ENCODE measurements at regions of chr1 and their contacts with region 1.

Region 1: GRCh38 chr1:201023517-201023902 is at the start of gene KIF21B:
- DNase-seq: peak; percentile 83 to 94 (median 90)
- ATAC-seq: peak; percentile 81 to 82
- H3K4me3 Mint-ChIP-seq: peak within 1 kb of the TSS; percentile 88 to 98 (median 93)
- H3K27ac Mint-ChIP-seq: peak within 1 kb of the TSS; percentile 91 to 99 (median 98)
- H3K4me1 Mint-ChIP-seq: peaks cover 39 to 80% (median 67%) of the 10 kb centered on the region in 4 donors
- H3K27me3 Mint-ChIP-seq: no peaks in the 10 kb centered on the region
- polyA plus RNA-seq, gene KIF21B: 2.2 to 8.3 (median 3.5) TPM

Region 2: GRCh38 chr1:200973937-200974657 is 49.4 kb before region 1 on chr1:
- POLR2A ChIA-PET with region 1: interaction called, 11 read pairs
- DNase-seq: peak in 1 of 10 donors; percentile 28
- ATAC-seq: peak in 1 of 2 donors; percentile 20
- H3K4me3 Mint-ChIP-seq: no peak overlapping the region
- H3K27ac Mint-ChIP-seq: peak overlapping the region in 7 of 10 donors; percentile 6 to 92 (median 20)
- H3K4me1 Mint-ChIP-seq: peaks cover 2 to 14% (median 10%) of the 10 kb centered on the region in 4 donors
- H3K27me3 Mint-ChIP-seq: no peaks in the 10 kb centered on the region

Region 3: GRCh38 chr1:201009962-201010645 is 13.4 kb before region 1 on chr1:
- POLR2A ChIA-PET with region 1: interaction called, 20 read pairs
- DNase-seq: no peak
- ATAC-seq: no peak
- H3K4me3 Mint-ChIP-seq: peak overlapping the region in 1 of 10 donors; percentile 32
- H3K27ac Mint-ChIP-seq: peak overlapping the region in 9 of 10 donors; percentile 27 to 93 (median 67)
- H3K4me1 Mint-ChIP-seq: peaks cover 39 to 61% (median 53%) of the 10 kb centered on the region in 4 donors
- H3K27me3 Mint-ChIP-seq: no peaks in the 10 kb centered on the region

Region 4: GRCh38 chr1:201059871-201060555 is 36.5 kb after region 1 on chr1:
- POLR2A ChIA-PET with region 1: no interaction called
- DNase-seq: no peak
- ATAC-seq: no peak
- H3K4me3 Mint-ChIP-seq: no peak overlapping the region
- H3K27ac Mint-ChIP-seq: peak overlapping the region in 1 of 10 donors; percentile 1
- H3K4me1 Mint-ChIP-seq: peaks cover 0 to 23% (median 3%) of the 10 kb centered on the region in 4 donors
- H3K27me3 Mint-ChIP-seq: peaks cover 0 to 11% (median 0%) of the 10 kb centered on the region in 5 donors

Region 5: DNA sequence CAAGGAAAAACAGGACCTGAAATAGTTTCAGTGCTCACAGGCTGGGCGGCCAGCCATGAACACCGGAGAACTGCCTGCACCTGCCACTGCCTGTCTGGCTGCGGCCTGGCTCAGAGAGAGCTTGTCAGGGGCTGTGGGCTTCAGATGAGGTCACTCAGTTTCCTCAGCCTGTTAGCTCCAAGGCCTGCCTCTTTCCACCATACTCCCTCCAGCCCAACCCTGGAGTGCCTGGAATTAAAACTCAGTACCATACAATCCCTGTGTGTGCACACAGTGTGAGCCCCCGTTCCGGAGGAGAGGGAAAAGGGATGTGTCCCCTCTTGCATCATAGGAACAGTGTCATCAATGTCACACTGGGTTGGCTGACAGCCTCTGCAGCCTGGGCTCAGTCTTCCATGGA is 72.5 kb after region 1 on chr1:
- POLR2A ChIA-PET with region 1: no interaction called
- DNase-seq: no peak
- ATAC-seq: no peak
- H3K4me3 Mint-ChIP-seq: no peak overlapping the region
- H3K27ac Mint-ChIP-seq: no peak overlapping the region
- H3K4me1 Mint-ChIP-seq: peaks cover 0 to 3% (median 0%) of the 10 kb centered on the region in 4 donors
- H3K27me3 Mint-ChIP-seq: peaks cover 1 to 16% (median 6%) of the 10 kb centered on the region in 5 donors

Region 6: DNA sequence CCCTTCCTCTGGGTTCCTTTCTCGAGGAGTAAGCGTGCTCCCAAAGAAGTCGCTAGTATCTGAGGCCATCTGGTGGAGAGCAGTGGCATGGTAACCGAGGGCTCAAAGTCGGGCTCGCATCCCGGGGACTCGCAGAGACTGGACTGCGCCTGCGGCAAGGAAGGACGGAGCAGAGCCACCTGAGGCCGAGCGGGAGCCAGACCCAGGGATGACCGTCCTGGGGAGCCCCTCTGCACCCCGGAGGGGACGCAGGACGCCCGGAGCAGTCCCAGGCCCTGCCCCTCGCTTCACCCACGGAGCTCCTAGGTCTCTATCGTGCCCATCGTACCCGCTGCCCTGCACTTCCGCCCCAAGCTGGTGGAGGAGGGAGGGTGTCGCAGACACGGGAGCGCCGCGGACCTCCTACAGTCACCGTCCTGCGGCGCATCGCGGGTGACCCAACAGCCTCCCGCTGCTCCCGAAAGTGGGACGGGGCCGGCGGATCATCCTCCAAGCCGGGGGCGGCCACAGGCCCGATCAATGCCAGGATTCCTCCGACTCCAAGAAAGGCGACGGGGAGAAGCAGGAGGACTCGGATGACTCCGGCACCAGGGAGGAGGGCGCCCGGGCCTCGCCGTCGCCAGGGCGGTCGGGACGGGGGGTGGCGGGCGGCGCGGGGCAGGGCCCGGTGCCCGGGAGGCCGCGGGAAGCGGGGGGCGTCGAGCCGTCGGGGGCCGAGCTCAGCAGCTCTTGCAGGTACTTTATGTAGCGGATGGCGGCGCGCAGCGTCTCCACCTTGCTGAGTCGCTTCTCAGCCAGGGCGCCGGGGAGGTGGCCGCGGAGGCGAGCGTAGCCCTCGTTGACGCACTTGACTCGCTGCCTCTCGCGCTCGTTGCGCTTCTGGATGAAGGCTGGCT is 91.0 kb after region 1 on chr1:
- POLR2A ChIA-PET with region 1: interaction called, 10 read pairs
- DNase-seq: peak; percentile 47 to 83 (median 70)
- ATAC-seq: peak; percentile 84 to 91
- H3K4me3 Mint-ChIP-seq: peak overlapping the region; percentile 84 to 95 (median 94)
- H3K27ac Mint-ChIP-seq: peak overlapping the region; percentile 79 to 95 (median 90)
- H3K4me1 Mint-ChIP-seq: peaks cover 9 to 29% (median 15%) of the 10 kb centered on the region in 4 donors
- H3K27me3 Mint-ChIP-seq: no peaks in the 10 kb centered on the region